GM12878 (cell line): ENCODE measurements at regions of chr1 and their contacts with region 1.

Region 1: GRCh38 chr1:56995414-56996100 is 29.7 kb upstream of the C8B start:
- DNase-seq: no peak
- ATAC-seq: no peak
- H3K4me3 ChIP-seq: no peak overlapping the region
- H3K27ac ChIP-seq: no peak overlapping the region
- H3K4me1 ChIP-seq: no peaks in the 10 kb centered on the region
- H3K27me3 ChIP-seq: peaks cover 2% of the 10 kb centered on the region in 2 experiments; a peak in 2 of 4 replicates
- CTCF ChIP-seq: no peak
- EP300 ChIP-seq: no peak
- POLR2A ChIP-seq: no peak
- RAD21 ChIP-seq: no peak

Region 2: GRCh38 chr1:56958526-56958925 is 37.0 kb before region 1 on chr1:
- CTCF ChIA-PET with region 1: no interaction called
- POLR2A ChIA-PET with region 1: no interaction called
- RAD21 ChIA-PET with region 1: no interaction called
- SMC1A ChIA-PET with region 1: no interaction called
- in situ Hi-C with region 1: no loop called
- intact Hi-C with region 1: no loop called
- DNase-seq: no peak
- ATAC-seq: no peak
- H3K4me3 ChIP-seq: no peak overlapping the region
- H3K27ac ChIP-seq: no peak overlapping the region
- H3K4me1 ChIP-seq: no peaks in the 10 kb centered on the region
- H3K27me3 ChIP-seq: no peaks in the 10 kb centered on the region
- CTCF ChIP-seq: no peak
- EP300 ChIP-seq: no peak
- POLR2A ChIP-seq: no peak
- RAD21 ChIP-seq: no peak

Region 3: DNA sequence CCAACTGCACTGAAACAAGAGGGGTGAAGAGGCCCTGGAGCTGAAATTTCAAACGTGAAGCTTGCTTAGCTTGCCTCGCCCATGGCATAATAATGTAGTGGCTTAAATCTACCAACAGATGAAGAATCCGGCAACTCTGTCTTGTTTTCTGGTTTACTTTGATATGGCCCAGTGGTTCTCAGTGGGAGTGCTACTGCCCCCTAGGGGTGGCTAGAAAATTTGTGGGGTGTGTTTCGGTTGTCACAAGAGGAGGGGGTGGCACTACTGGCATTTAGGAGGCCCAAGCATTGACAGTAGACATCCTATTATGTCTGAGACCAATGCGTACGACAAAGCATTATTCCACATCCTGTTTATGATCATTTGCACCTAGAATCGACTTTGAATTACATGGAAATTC is 22.2 kb after region 1 on chr1:
- CTCF ChIA-PET with region 1: no interaction called
- POLR2A ChIA-PET with region 1: no interaction called
- RAD21 ChIA-PET with region 1: no interaction called
- SMC1A ChIA-PET with region 1: no interaction called
- in situ Hi-C with region 1: no loop called
- intact Hi-C with region 1: loop called (anchors 2 kb)
- DNase-seq: no peak
- ATAC-seq: no peak; the same call in 2 of the 3 replicates
- H3K4me3 ChIP-seq: no peak overlapping the region
- H3K27ac ChIP-seq: no peak overlapping the region
- H3K4me1 ChIP-seq: no peaks in the 10 kb centered on the region
- H3K27me3 ChIP-seq: no peaks in the 10 kb centered on the region
- CTCF ChIP-seq: peak in 2 of 3 experiments; percentile 22 to 31; a peak in 1 of 6 replicates
- EP300 ChIP-seq: no peak
- POLR2A ChIP-seq: no peak
- RAD21 ChIP-seq: no peak